Activated naive CD4-positive, alpha-beta T cell treated with anti-CD3 and anti-CD28 coated beads for 36 hours (primary cell): ENCODE measurements at regions of chr2 and their contacts with region 1.

Region 1: DNA sequence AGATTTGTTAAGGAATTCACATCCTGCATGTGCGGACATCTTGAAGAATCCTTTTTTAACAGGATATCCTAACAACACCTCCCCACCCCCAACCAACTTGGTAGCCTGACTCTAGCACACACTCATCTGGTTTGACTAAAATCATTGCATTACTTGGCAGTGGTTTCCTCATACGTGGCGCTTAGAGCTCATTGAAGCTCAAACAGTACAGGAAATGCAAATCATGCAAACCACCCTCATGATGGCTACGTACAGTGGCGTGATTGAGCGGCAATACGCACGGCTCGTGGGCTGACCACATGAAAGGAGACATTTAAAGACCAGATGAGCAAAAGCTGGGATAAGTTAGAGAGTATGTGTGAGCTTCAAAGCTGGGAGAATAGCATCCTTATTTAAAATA is 336.2 kb downstream of the ZEB2 start:
- DNase-seq: peak; percentile 89
- H3K4me3 Mint-ChIP-seq: peak overlapping the region; percentile 52
- H3K27ac Mint-ChIP-seq: peak overlapping the region; percentile 81
- H3K4me1 Mint-ChIP-seq: peaks cover 42% of the 10 kb centered on the region
- H3K27me3 Mint-ChIP-seq: no peaks in the 10 kb centered on the region

Region 2: GRCh38 chr2:143705108-143705686 is 478.5 kb before region 1 on chr2:
- CTCF ChIA-PET with region 1: no interaction called
- intact Hi-C with region 1: loop called (anchors 1 kb)
- DNase-seq: no peak
- H3K4me3 Mint-ChIP-seq: no peak overlapping the region
- H3K27ac Mint-ChIP-seq: no peak overlapping the region
- H3K4me1 Mint-ChIP-seq: peaks cover 30% of the 10 kb centered on the region
- H3K27me3 Mint-ChIP-seq: no peaks in the 10 kb centered on the region

Region 3: GRCh38 chr2:144230448-144231085 is 46.8 kb after region 1 on chr2:
- CTCF ChIA-PET with region 1: interaction called, 3 read pairs
- intact Hi-C with region 1: loop called (anchors 1 kb)
- DNase-seq: peak; percentile 7
- H3K4me3 Mint-ChIP-seq: no peak overlapping the region
- H3K27ac Mint-ChIP-seq: peak overlapping the region; percentile 64
- H3K4me1 Mint-ChIP-seq: peaks cover 23% of the 10 kb centered on the region
- H3K27me3 Mint-ChIP-seq: no peaks in the 10 kb centered on the region

Region 4: DNA sequence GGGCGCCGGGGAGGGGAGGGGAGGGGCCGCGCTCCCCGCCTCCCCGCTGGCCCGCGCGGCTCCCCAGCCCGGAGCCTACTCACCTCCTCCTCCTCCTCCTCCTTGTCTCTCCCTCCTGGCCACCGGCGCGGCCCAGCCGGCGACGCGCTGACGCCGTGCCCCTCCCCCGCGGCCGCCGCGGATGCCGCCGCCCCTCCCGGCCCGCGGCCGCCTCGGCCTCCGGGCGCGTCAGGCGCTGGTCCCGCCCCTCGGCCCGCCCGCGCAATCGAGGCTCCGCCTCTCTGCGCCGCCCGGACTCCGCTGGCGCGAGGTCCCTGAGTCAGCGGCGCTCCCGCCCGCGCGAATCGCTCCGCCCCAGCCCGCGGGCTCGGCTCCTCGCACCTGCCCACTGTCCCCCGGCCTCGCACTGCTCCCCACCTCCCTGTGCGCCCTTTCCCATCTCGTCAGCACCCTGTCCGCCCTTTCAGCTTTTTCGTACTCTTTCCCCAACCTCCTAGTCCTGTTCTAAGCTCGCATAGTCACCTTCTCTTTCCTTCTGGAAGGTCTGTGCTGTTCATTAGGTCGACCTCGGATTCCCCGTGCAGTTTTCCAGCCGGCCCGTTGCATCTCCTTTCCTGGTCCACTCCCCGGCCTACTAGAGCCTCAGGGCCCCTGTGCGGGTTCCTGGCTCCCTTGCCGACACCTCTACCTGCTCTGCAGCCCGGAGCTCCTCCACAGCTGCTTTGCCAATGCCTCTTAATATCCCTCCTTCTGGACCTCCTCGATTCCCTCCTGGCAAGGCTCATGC is 148.8 kb after region 1 on chr2:
- CTCF ChIA-PET with region 1: no interaction called
- intact Hi-C with region 1: loop called (anchors 1 kb)
- DNase-seq: peak; percentile 83
- H3K4me3 Mint-ChIP-seq: peak overlapping the region; percentile 79
- H3K27ac Mint-ChIP-seq: peak overlapping the region; percentile 78
- H3K4me1 Mint-ChIP-seq: peaks cover 19% of the 10 kb centered on the region
- H3K27me3 Mint-ChIP-seq: no peaks in the 10 kb centered on the region